GM23248 (cell line): ENCODE measurements at regions of chr7 and their contacts with region 1.

Region 1: GRCh38 chr7:150988230-150989226 is 2.3 kb upstream of the NOS3 start:
- DNase-seq: peak; percentile 43
- H3K4me3 ChIP-seq: no peak overlapping the region
- H3K27ac ChIP-seq: no peak overlapping the region
- H3K4me1 ChIP-seq: no peaks in the 10 kb centered on the region
- H3K27me3 ChIP-seq: no peaks in the 10 kb centered on the region; the same call in 1 of the 2 replicates

Region 2: GRCh38 chr7:150903606-150904005 is 84.9 kb before region 1 on chr7:
- in situ Hi-C with region 1: loop called (anchors 5 kb)
- DNase-seq: peak; percentile 81
- H3K4me3 ChIP-seq: no peak overlapping the region
- H3K27ac ChIP-seq: no peak overlapping the region
- H3K4me1 ChIP-seq: peaks cover 5% of the 10 kb centered on the region
- H3K27me3 ChIP-seq: peaks cover 15% of the 10 kb centered on the region; the same call in 1 of the 2 replicates

Region 3: DNA sequence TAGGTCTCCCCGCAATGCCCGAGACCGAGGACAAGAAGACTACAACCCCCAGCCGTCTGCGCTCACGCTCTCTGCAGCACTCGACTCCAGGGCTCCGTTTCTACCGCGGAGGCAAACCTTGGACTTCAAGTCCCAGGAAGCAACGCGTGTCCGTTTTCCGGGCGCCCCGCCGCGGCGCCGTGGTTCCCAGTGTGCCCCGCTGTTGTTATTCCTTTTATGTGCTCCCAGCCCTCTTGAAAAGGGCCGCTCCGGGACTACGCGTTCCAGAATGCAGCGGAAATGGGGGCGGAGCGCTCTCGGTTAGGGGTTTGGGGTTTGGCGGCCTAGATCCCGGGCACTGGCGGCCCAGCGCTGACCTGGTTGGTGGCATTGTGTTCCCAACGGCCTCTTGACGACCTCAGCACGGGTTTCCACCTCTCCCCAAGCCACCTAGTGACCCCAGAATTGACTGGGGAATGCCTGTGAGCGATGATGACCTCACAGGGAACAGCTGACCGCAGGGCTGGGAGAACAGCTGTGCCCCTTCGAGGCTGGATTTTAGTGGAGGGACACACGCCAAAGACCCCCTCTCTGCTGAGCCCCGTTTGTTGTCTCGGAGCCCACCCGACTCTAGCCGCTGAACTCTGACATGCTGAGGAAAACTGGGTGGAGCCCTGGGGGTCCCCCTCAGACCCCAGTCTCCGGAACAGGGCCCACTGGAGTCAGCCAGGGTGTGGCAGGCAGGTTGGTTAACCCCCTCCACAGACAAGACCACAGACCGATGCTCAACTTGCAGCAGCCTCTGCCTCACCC is 69.7 kb after region 1 on chr7:
- in situ Hi-C with region 1: loop called (anchors 10 kb)
- DNase-seq: peak; percentile 100
- H3K4me3 ChIP-seq: peak overlapping the region; percentile 93
- H3K27ac ChIP-seq: peak overlapping the region; percentile 94
- H3K4me1 ChIP-seq: peaks cover 36% of the 10 kb centered on the region
- H3K27me3 ChIP-seq: no peaks in the 10 kb centered on the region